ENCODE measurements at regions of chr17 and their contacts with region 1.

Region 1: GRCh38 chr17:59837308-59838051 is 55.3 kb downstream of the TUBD1 start:
- DNase-seq: peak; percentile 77
- H3K4me3 Mint-ChIP-seq: peak overlapping the region; percentile 100
- H3K27ac Mint-ChIP-seq: peak overlapping the region; percentile 99
- H3K4me1 Mint-ChIP-seq: peaks cover 37% of the 10 kb centered on the region
- H3K27me3 Mint-ChIP-seq: no peaks in the 10 kb centered on the region

Region 2: GRCh38 chr17:58337600-58338453 is 1499.7 kb before region 1 on chr17:
- CTCF ChIA-PET with region 1: no interaction called
- POLR2A ChIA-PET with region 1: interaction called, 48 read pairs
- DNase-seq: peak; percentile 96
- H3K4me3 Mint-ChIP-seq: peak overlapping the region; percentile 98
- H3K27ac Mint-ChIP-seq: peak overlapping the region; percentile 100
- H3K4me1 Mint-ChIP-seq: peaks cover 52% of the 10 kb centered on the region
- H3K27me3 Mint-ChIP-seq: no peaks in the 10 kb centered on the region

Region 3: DNA sequence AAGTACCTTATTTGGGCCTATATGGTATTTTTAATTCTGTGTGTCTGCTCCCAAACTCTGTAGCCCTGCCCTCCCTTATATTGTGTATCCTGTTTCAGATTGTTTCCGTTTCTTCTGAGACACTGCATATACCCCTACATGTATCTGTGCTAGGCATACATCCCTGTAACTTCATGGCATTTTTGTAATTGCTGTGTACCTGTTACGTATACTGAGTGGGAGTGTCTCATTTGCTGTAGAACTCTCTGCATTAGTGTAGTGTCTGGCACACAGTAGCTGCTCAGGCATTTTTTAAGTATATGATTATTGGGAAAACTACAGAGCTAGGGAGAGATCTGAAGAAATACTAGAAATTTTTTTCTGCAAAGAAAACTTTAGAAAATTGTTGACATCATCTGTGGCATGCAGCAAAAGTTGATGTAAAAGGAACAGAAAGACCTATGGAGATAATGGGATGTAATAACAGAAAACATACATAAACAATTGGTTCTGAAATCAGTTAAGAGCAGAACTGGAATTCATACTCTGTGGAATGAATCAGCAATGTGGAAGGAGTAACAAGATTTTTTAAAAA is 206.3 kb before region 1 on chr17:
- CTCF ChIA-PET with region 1: no interaction called
- POLR2A ChIA-PET with region 1: no interaction called
- DNase-seq: no peak
- H3K4me3 Mint-ChIP-seq: no peak overlapping the region
- H3K27ac Mint-ChIP-seq: no peak overlapping the region
- H3K4me1 Mint-ChIP-seq: peaks cover 78% of the 10 kb centered on the region
- H3K27me3 Mint-ChIP-seq: no peaks in the 10 kb centered on the region

Region 4: DNA sequence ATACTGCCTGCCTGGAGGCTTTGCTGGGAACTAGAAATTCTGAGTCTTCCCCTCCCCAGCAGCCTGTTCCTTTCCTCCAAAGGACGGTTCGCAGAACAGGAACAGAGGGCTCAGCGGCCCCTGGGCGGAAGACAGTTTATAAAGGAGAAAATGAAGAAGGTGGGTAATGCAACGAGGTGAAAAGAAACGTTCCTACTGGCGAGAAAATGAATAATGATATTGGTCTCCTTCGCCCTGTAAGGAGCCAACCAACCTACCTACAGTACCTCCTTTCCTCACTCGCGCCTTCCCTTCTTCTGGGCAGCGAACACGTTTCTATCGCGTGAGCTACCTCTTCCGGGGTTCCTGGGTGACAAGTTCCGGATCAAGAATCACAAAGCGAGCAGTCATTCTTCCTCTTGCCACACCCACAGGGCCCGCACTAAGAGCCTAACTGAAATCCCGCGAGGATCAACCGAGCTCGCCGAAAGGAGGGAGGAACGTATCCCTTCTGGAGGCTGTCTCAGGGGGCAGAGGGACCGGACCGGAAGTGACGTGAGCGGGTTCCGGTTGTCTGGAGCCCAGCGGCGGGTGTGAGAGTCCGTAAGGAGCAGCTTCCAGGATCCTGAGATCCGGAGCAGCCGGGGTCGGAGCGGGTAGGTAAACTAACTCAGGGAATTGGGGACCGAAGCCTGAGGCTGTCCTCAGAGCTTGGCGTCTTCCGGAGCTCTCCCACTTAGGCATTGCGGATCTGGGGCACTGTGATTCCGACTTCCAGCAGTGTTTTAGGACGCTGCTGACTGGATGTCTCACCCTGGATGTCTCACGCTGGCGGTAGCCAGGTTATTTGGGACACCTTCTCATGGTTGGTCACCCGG is 130.1 kb before region 1 on chr17 and contains the starts of genes PTRH2 and VMP1:
- CTCF ChIA-PET with region 1: interaction called, 3 read pairs
- POLR2A ChIA-PET with region 1: interaction called, 32 read pairs
- DNase-seq: peak; percentile 95
- H3K4me3 Mint-ChIP-seq: peak within 1 kb of the TSS; percentile 98
- H3K27ac Mint-ChIP-seq: peak within 1 kb of the TSS; percentile 91
- H3K4me1 Mint-ChIP-seq: peaks cover 50% of the 10 kb centered on the region
- H3K27me3 Mint-ChIP-seq: no peaks in the 10 kb centered on the region
- total RNA-seq, gene PTRH2: 22.8 to 23.3 TPM
- total RNA-seq, gene VMP1: 398 to 408 TPM

Region 5: DNA sequence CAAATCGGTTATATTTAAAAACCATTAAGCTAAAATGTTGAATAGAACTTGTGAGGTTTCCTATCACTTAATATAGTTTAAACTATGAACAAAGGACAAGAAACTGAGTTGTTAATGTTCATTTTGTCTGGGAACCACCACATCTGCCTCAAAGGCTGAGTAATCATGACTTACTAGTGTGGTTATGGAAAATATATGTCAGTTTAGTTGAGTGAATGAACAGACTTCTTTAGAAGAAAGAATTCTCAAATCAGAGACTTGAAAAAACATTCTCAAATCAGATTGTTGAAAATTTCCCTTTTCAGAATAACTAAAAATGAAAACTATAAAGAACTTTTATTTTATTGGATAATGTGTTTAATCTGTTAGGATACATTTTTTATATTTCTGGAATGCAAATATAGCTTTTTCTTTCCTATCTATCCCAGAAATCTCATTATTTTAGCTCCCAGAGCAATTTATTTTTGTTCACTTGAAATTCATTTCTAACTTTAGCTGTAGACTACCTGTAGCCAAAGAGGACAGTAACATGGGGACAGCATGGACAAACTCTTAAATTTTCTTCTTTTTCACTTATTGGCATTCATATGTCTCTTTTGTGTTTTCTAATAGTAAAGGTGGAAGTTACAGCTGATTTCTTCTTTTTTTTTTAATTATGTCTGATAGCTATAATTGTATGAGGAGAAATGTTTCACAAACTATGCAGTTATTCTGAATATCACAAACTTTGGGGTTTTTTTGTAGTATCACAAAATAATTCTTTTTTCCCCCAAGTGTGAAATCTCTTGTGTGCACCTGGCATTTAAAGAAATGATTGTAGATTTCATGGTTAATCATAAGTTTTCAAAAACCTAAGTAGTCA is 74.7 kb before region 1 on chr17:
- CTCF ChIA-PET with region 1: no interaction called
- POLR2A ChIA-PET with region 1: interaction called, 157 read pairs
- DNase-seq: no peak
- H3K4me3 Mint-ChIP-seq: peak overlapping the region; percentile 11
- H3K27ac Mint-ChIP-seq: peak overlapping the region; percentile 83
- H3K4me1 Mint-ChIP-seq: peaks cover 49% of the 10 kb centered on the region
- H3K27me3 Mint-ChIP-seq: no peaks in the 10 kb centered on the region

Region 6: GRCh38 chr17:59800530-59800942 is 36.9 kb before region 1 on chr17:
- CTCF ChIA-PET with region 1: interaction called, 5 read pairs
- POLR2A ChIA-PET with region 1: interaction called, 2,499 read pairs
- DNase-seq: no peak
- H3K4me3 Mint-ChIP-seq: no peak overlapping the region
- H3K27ac Mint-ChIP-seq: no peak overlapping the region
- H3K4me1 Mint-ChIP-seq: peaks cover 44% of the 10 kb centered on the region
- H3K27me3 Mint-ChIP-seq: no peaks in the 10 kb centered on the region

Region 7: DNA sequence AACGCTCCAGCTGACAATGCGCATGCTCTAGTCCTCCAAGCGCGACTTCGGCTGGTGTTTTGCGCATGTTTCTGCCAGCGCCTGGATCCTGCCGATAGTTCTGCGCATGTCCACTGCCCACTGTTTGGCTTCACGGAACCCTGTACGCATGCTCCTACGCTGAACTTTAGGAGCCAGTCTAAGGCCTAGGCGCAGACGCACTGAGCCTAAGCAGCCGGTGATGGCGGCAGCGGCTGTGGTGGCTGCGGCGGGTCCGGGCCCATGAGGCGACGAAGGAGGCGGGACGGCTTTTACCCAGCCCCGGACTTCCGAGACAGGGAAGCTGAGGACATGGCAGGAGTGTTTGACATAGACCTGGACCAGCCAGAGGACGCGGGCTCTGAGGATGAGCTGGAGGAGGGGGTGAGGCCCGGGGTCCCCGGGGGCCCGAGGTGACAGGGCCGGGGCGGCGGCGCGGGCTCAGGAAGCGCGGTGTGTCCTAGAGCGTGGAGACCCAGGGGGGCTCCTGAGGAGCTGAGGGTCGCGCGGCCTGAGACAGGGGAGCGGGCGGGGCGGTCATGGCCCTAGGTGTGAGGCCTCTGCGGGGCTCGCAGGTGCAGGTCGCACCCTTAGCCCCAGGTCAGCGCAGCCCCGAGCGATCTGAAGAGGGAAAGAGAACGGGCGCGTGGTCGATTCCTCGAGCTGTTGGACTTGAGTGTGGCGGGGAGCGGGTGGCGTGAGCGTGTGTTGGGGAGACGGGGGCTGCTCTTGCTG is 55.6 kb after region 1 on chr17 and contains the starts of genes RPS6KB1 and TUBD1:
- CTCF ChIA-PET with region 1: no interaction called
- POLR2A ChIA-PET with region 1: interaction called, 29 read pairs
- DNase-seq: peak; percentile 98
- H3K4me3 Mint-ChIP-seq: peak within 1 kb of the TSS; percentile 100
- H3K27ac Mint-ChIP-seq: peak within 1 kb of the TSS; percentile 96
- H3K4me1 Mint-ChIP-seq: peaks cover 56% of the 10 kb centered on the region
- H3K27me3 Mint-ChIP-seq: no peaks in the 10 kb centered on the region
- total RNA-seq, gene RPS6KB1: 44.3 to 50.1 TPM
- total RNA-seq, gene TUBD1: 11.4 to 11.7 TPM